ENCODE measurements at regions of chr20 and their contacts with region 1.

Region 1: GRCh38 chr20:32743237-32744112 is at the start of gene COMMD7:
- DNase-seq: peak; percentile 29
- H3K4me3 Mint-ChIP-seq: peak within 1 kb of the TSS; percentile 82
- H3K27ac Mint-ChIP-seq: peak within 1 kb of the TSS; percentile 91
- H3K4me1 Mint-ChIP-seq: peaks cover 6% of the 10 kb centered on the region
- H3K27me3 Mint-ChIP-seq: no peaks in the 10 kb centered on the region
- CTCF ChIP-seq: no peak
- total RNA-seq, gene COMMD7: 24.1 and 28.3 TPM in 2 replicates

Region 2: GRCh38 chr20:32411955-32412706 is 331.3 kb before region 1 on chr20:
- CTCF ChIA-PET with region 1: no interaction called
- POLR2A ChIA-PET with region 1: no interaction called
- intact Hi-C with region 1: no loop called
- DNase-seq: no peak
- H3K4me3 Mint-ChIP-seq: no peak overlapping the region
- H3K27ac Mint-ChIP-seq: no peak overlapping the region
- H3K4me1 Mint-ChIP-seq: peaks cover 17% of the 10 kb centered on the region
- H3K27me3 Mint-ChIP-seq: no peaks in the 10 kb centered on the region
- CTCF ChIP-seq: no peak

Region 3: DNA sequence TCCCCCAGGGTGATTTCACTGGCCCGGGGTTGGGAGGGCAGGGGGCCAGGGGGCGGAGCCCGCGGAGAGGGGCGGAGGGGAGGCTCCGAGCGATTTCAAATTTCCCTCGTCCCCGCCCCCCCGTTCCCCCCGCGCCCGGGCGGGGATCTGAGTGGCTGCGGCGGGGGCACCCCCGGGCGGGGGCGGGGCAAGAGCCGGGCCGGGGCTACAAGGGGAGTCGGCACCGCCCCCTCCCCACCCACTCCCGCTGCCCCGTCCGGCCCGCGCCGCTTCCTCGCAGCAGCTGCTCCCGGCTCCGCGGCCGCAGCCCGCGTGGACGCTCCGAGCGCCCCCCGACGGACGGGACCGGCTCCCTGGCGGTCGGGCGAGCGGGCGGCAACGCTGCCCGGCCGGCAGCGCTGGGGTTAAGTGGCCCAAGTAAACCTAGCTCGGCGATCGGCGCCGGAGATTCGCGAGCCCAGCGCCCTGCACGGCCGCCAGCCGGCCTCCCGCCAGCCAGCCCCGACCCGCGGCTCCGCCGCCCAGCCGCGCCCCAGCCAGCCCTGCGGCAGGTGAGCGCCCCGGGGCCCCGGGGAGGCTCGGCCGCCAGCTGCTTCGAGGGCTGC is 18.8 kb after region 1 on chr20 and contains the start of gene DNMT3B:
- CTCF ChIA-PET with region 1: interaction called, 3 read pairs
- POLR2A ChIA-PET with region 1: interaction called, 26 read pairs
- intact Hi-C with region 1: no loop called
- DNase-seq: peak; percentile 65
- H3K4me3 Mint-ChIP-seq: peak within 1 kb of the TSS; percentile 85
- H3K27ac Mint-ChIP-seq: peak within 1 kb of the TSS; percentile 63
- H3K4me1 Mint-ChIP-seq: no peaks in the 10 kb centered on the region
- H3K27me3 Mint-ChIP-seq: no peaks in the 10 kb centered on the region
- CTCF ChIP-seq: peak; percentile 6
- total RNA-seq, gene DNMT3B: 1.3 and 2.0 TPM in 2 replicates